ENCODE measurements at regions of chr3 and their contacts with region 1.

Region 1: DNA sequence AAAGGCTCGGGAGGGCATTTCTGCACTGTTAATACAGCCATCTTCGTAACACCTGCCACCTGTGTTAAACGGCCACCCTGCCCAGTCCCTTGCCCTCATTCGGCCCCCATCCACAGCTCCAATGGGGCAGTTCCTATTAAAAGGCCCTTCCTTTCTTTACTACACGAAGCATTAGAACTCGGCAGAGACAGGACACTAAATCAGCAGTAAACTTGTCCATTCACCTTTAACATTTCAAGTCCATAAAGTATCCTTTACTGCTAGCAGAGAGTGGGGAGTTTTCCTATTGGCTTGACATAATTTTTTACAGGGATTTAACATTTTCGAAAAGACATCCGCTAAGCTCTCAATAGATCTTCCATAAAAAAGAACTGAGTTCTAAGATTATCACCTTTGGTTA is 76.3 kb downstream of the LRRN1 start:
- DNase-seq: no peak
- H3K4me3 ChIP-seq: no peak overlapping the region
- H3K27ac ChIP-seq: no peak overlapping the region
- H3K4me1 ChIP-seq: no peaks in the 10 kb centered on the region
- H3K27me3 ChIP-seq: no peaks in the 10 kb centered on the region
- CTCF ChIP-seq: no peak
- EP300 ChIP-seq: no peak
- POLR2A ChIP-seq: no peak

Region 2: GRCh38 chr3:3573341-3573740 is 302.1 kb before region 1 on chr3:
- in situ Hi-C with region 1: no loop called
- intact Hi-C with region 1: loop called (anchors 5 kb)
- DNase-seq: no peak
- H3K4me3 ChIP-seq: no peak overlapping the region
- H3K27ac ChIP-seq: no peak overlapping the region
- H3K4me1 ChIP-seq: no peaks in the 10 kb centered on the region
- H3K27me3 ChIP-seq: no peaks in the 10 kb centered on the region
- CTCF ChIP-seq: no peak
- EP300 ChIP-seq: no peak
- POLR2A ChIP-seq: no peak

Region 3: DNA sequence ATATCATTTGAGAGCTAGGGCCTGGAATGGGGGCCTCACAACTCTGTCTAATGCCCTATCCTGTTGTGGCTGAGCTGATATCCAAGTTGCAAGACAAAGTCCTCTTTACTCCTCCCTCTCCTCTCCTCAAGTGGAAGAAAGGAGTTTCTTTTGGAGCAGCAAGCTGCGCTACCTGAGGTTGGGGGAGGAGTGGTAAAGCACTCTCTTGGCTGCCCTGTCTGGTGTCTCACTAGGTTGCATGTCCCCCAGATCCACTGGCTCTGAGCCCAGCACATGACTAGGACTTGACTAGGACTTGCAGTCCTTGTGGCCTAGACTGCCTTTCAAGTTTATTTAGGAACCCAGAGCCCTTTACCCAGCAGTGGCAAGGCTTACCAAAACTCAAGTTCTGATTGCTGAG is 286.6 kb after region 1 on chr3:
- in situ Hi-C with region 1: no loop called
- intact Hi-C with region 1: no loop called
- DNase-seq: no peak
- H3K4me3 ChIP-seq: no peak overlapping the region
- H3K27ac ChIP-seq: no peak overlapping the region
- H3K4me1 ChIP-seq: no peaks in the 10 kb centered on the region
- H3K27me3 ChIP-seq: no peaks in the 10 kb centered on the region
- CTCF ChIP-seq: no peak
- EP300 ChIP-seq: no peak
- POLR2A ChIP-seq: no peak

Region 4: DNA sequence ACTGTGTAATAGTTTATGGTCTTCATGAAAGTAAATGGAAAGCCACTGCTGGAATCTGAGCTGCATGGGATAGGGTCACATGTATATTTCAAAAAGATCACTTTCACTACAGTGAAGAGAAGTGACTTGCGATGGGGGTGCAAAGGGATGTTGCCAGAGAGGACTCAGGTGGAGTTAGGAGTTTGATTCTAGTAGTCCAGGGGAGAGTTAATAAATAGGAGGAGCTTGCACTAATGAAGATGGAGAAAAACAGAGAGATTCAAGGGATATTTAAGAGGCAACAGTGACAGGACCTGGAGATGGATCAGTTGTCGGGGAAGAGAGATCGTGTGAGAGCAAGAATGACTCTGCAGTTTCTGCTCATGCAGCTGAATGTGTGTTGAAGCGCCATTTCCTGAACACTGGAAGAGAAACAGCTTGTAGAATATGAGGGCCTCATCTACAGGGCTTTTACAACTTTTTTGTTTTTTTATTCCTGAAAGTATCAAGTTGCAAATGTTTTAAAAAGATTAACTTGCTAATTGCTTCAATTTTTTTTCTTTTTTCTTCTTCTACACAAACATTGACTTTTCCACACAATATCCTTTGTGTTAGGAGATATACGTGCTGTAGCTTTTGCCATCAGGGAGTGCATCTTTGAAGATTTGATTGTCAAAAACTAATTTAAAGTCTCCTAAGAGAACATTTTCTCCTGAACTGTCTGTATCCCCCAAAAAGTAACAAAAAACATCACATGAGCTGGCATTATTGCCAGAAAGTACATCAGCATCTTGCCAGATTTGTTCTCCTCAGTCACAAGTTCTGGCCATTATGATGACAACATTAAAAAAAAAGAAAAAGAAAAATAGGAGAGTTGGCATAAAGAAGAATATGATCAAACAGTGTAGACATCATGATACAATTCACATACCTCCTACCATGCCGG is 465.2 kb after region 1 on chr3:
- in situ Hi-C with region 1: no loop called
- intact Hi-C with region 1: no loop called
- DNase-seq: no peak
- H3K4me3 ChIP-seq: no peak overlapping the region
- H3K27ac ChIP-seq: peak overlapping the region in 2 of 4 donors; percentile 12 to 35
- H3K4me1 ChIP-seq: peaks cover 0 to 5% (median 0%) of the 10 kb centered on the region in 4 donors
- H3K27me3 ChIP-seq: no peaks in the 10 kb centered on the region
- CTCF ChIP-seq: no peak
- EP300 ChIP-seq: no peak
- POLR2A ChIP-seq: no peak

Measured in transverse colon (tissue), 4 donors.